CD8-positive, alpha-beta T cell (primary cell): ENCODE measurements at regions of chr11 and their contacts with region 1.

Region 1: GRCh38 chr11:65817835-65818742 is 15.7 kb upstream of the SNX32 start:
- DNase-seq: peak; percentile 89 to 99 (median 94)
- ATAC-seq: peak; percentile 93
- H3K4me3 ChIP-seq: peak overlapping the region; percentile 47 to 74
- H3K4me3 Mint-ChIP-seq: peak overlapping the region; percentile 80
- H3K27ac ChIP-seq: peak overlapping the region; percentile 62 to 65
- H3K27ac Mint-ChIP-seq: peak overlapping the region; percentile 67
- H3K4me1 ChIP-seq: peaks cover 12% of the 10 kb centered on the region
- H3K4me1 Mint-ChIP-seq: peaks cover 14% of the 10 kb centered on the region
- H3K27me3 ChIP-seq: no peaks in the 10 kb centered on the region
- H3K27me3 Mint-ChIP-seq: no peaks in the 10 kb centered on the region
- CTCF ChIP-seq: peak; percentile 100

Region 2: DNA sequence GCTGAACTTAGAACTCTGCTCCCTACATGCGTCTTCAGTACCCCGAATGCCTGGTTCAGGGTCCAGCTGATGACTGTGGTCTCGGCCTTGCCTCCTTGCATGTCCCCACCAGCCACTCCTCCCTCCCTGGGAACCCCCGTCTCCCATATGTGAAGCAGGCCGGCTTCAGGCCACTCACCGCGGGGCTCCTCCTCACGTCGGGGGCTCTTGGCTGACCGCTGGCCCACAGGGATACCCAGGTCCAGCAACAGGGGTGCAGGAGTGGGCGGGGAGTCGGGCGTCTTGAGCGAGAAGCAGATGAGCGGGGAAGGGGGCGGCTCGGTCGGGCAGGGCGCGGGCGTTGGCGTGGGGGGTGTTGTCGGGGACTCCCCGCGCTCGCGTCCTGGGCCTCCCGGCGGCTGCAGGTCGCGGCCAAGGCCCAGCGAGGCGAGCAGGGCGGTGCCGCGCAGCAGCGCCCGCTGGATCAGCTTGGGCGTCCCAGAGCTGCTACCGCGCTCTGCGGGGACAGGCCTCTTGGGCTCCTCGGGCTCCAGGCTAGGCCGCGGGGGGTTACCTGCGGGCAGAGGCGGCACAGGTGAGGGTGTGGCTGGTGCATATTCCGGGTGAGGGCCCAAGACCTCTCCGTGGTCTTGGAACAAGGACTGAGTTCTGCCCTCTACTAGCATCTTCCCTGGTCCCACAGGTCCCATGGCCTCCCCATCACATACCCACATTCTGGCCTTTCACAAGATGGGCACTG is 218.7 kb before region 1 on chr11:
- CTCF ChIA-PET with region 1: no interaction called
- POLR2A ChIA-PET with region 1: no interaction called
- intact Hi-C with region 1: no loop called
- DNase-seq: no peak
- ATAC-seq: no peak
- H3K4me3 ChIP-seq: no peak overlapping the region
- H3K4me3 Mint-ChIP-seq: no peak overlapping the region
- H3K27ac ChIP-seq: no peak overlapping the region
- H3K27ac Mint-ChIP-seq: no peak overlapping the region
- H3K4me1 ChIP-seq: peaks cover 8% of the 10 kb centered on the region
- H3K4me1 Mint-ChIP-seq: peaks cover 7% of the 10 kb centered on the region
- H3K27me3 ChIP-seq: no peaks in the 10 kb centered on the region
- H3K27me3 Mint-ChIP-seq: no peaks in the 10 kb centered on the region
- CTCF ChIP-seq: no peak

Region 3: GRCh38 chr11:65625628-65626342 is 192.3 kb before region 1 on chr11:
- CTCF ChIA-PET with region 1: interaction called, 7 read pairs
- POLR2A ChIA-PET with region 1: no interaction called
- intact Hi-C with region 1: loop called (anchors 2 to 5 kb)
- DNase-seq: peak in 8 of 9 experiments; percentile 24 to 83 (median 63)
- ATAC-seq: peak; percentile 88
- H3K4me3 ChIP-seq: no peak overlapping the region
- H3K4me3 Mint-ChIP-seq: no peak overlapping the region
- H3K27ac ChIP-seq: no peak overlapping the region
- H3K27ac Mint-ChIP-seq: peak overlapping the region; percentile 55
- H3K4me1 ChIP-seq: peaks cover 5% of the 10 kb centered on the region
- H3K4me1 Mint-ChIP-seq: peaks cover 9% of the 10 kb centered on the region
- H3K27me3 ChIP-seq: no peaks in the 10 kb centered on the region
- H3K27me3 Mint-ChIP-seq: no peaks in the 10 kb centered on the region
- CTCF ChIP-seq: peak; percentile 66

Region 4: GRCh38 chr11:65720237-65720934 is 97.7 kb before region 1 on chr11 and contains the start of gene RNASEH2C:
- CTCF ChIA-PET with region 1: interaction called, 10 read pairs
- POLR2A ChIA-PET with region 1: no interaction called
- intact Hi-C with region 1: no loop called
- DNase-seq: peak; percentile 53 to 89 (median 73)
- ATAC-seq: peak; percentile 93
- H3K4me3 ChIP-seq: peak within 1 kb of the TSS; percentile 84 to 92
- H3K4me3 Mint-ChIP-seq: peak within 1 kb of the TSS; percentile 90
- H3K27ac ChIP-seq: peak within 1 kb of the TSS; percentile 70 to 73
- H3K27ac Mint-ChIP-seq: peak within 1 kb of the TSS; percentile 88
- H3K4me1 ChIP-seq: peaks cover 22% of the 10 kb centered on the region
- H3K4me1 Mint-ChIP-seq: peaks cover 33% of the 10 kb centered on the region
- H3K27me3 ChIP-seq: no peaks in the 10 kb centered on the region
- H3K27me3 Mint-ChIP-seq: no peaks in the 10 kb centered on the region
- CTCF ChIP-seq: no peak
- total RNA-seq, gene RNASEH2C: 27.7 to 32.0 TPM

Region 5: GRCh38 chr11:65766535-65766934 is 51.6 kb before region 1 on chr11:
- CTCF ChIA-PET with region 1: interaction called, 7 read pairs
- POLR2A ChIA-PET with region 1: no interaction called
- intact Hi-C with region 1: loop called in 1 of 2 experiments (anchors 10 kb)
- DNase-seq: no peak
- ATAC-seq: no peak
- H3K4me3 ChIP-seq: no peak overlapping the region
- H3K4me3 Mint-ChIP-seq: no peak overlapping the region
- H3K27ac ChIP-seq: no peak overlapping the region
- H3K27ac Mint-ChIP-seq: no peak overlapping the region
- H3K4me1 ChIP-seq: peaks cover 5% of the 10 kb centered on the region
- H3K4me1 Mint-ChIP-seq: peaks cover 3% of the 10 kb centered on the region
- H3K27me3 ChIP-seq: no peaks in the 10 kb centered on the region
- H3K27me3 Mint-ChIP-seq: peaks cover under 1% of the 10 kb centered on the region
- CTCF ChIP-seq: no peak

Region 6: GRCh38 chr11:65779851-65780577 is 38.1 kb before region 1 on chr11:
- CTCF ChIA-PET with region 1: interaction called, 118 read pairs
- POLR2A ChIA-PET with region 1: interaction called, 6 read pairs
- intact Hi-C with region 1: loop called (anchors 1 kb)
- DNase-seq: peak; percentile 46 to 88 (median 76)
- ATAC-seq: peak; percentile 74
- H3K4me3 ChIP-seq: peak overlapping the region; percentile 85
- H3K4me3 Mint-ChIP-seq: peak overlapping the region; percentile 86
- H3K27ac ChIP-seq: peak overlapping the region; percentile 31 to 52
- H3K27ac Mint-ChIP-seq: peak overlapping the region; percentile 77
- H3K4me1 ChIP-seq: peaks cover 17% of the 10 kb centered on the region
- H3K4me1 Mint-ChIP-seq: peaks cover 8% of the 10 kb centered on the region
- H3K27me3 ChIP-seq: no peaks in the 10 kb centered on the region
- H3K27me3 Mint-ChIP-seq: peaks cover under 1% of the 10 kb centered on the region
- CTCF ChIP-seq: peak; percentile 97

Region 7: DNA sequence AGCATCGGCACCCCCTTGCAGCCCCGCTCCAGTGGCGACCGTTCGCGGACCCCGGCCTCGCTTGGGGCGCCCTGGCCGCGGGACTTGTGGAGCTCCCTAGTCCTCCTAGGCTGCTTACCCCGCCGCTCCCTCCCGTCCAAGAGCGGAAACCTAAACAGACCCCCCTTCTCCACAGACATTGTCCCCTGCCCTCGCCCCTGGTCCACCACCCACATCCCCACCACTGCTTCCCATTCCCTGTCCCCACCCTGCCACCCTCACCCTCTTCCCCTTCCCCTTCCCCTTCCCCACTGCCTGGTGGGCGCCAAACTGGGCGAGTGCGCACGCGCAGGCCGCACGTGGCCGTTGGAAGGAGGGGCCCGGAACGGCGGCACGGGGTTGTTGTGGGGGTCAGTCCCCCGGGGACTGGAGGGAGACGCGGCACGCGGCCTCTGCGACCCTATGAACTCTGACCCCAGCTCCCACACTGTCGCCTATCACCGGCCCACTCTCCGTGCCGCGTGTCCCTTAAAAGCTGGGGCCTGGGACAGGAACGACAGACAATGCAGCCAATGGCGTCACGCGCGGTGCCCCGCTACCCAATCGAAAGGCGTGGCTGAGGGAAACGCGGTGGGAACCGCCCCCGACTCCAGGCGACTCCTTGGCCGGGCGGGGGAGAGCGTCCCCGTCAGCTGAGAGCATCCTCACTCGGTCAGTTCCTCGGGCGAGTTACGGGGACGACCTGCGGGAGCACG is 15.4 kb after region 1 on chr11 and contains the start of gene SNX32:
- CTCF ChIA-PET with region 1: interaction called, 15 read pairs
- POLR2A ChIA-PET with region 1: interaction called, 3 read pairs
- intact Hi-C with region 1: no loop called
- DNase-seq: peak; percentile 90 to 97 (median 94)
- ATAC-seq: peak; percentile 99
- H3K4me3 ChIP-seq: peak within 1 kb of the TSS; percentile 79 to 91
- H3K4me3 Mint-ChIP-seq: no peak within 1 kb of the TSS
- H3K27ac ChIP-seq: peak within 1 kb of the TSS; percentile 66 to 80
- H3K27ac Mint-ChIP-seq: peak within 1 kb of the TSS; percentile 64
- H3K4me1 ChIP-seq: peaks cover 17% of the 10 kb centered on the region
- H3K4me1 Mint-ChIP-seq: peaks cover 6% of the 10 kb centered on the region
- H3K27me3 ChIP-seq: peaks cover 0 to 3% of the 10 kb centered on the region in 2 experiments
- H3K27me3 Mint-ChIP-seq: no peaks in the 10 kb centered on the region
- CTCF ChIP-seq: no peak
- total RNA-seq, gene SNX32: 0.52 to 0.69 TPM